ENCODE measurements at regions of chr17 and their contacts with region 1.

Region 1: GRCh38 chr17:48074315-48075081 is 26.3 kb downstream of the NFE2L1 start:
- DNase-seq: no peak
- H3K4me3 ChIP-seq: no peak overlapping the region
- H3K27ac ChIP-seq: no peak overlapping the region
- H3K27me3 ChIP-seq: no peaks in the 10 kb centered on the region
- CTCF ChIP-seq: peak; percentile 85

Region 2: DNA sequence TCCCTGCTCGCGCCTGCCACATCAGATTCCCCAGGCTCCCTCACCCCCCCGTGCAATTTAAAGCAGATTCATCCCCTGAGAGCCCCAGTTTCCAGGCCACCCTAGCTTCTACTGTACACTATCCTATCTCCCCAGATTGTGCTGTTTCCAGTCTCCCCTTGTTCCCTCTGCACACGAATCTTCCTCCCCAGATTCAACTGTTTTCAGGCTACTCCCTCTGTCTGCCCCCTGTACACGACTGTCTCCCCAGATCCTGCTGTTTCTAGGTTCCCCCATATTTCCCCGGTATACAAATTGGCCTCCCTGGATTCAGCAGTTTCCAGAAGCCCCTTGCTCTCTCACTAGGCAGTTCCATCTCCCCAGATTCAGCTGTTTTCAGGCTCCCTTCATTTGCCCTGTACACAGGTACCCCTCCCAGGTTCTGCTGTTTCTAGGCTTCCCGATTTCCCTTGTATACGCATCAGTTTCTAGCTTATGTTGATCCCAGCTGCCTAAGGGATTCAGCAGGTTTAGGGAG is 59.8 kb before region 1 on chr17:
- CTCF ChIA-PET with region 1: no interaction called
- POLR2A ChIA-PET with region 1: no interaction called
- DNase-seq: no peak
- H3K4me3 ChIP-seq: no peak overlapping the region
- H3K27ac ChIP-seq: no peak overlapping the region
- H3K27me3 ChIP-seq: peaks cover 12% of the 10 kb centered on the region
- CTCF ChIP-seq: no peak

Region 3: GRCh38 chr17:48037036-48037837 is 37.3 kb before region 1 on chr17 and contains the start of gene COPZ2:
- CTCF ChIA-PET with region 1: interaction called, 16 read pairs
- POLR2A ChIA-PET with region 1: no interaction called
- DNase-seq: no peak
- H3K4me3 ChIP-seq: peak within 1 kb of the TSS; percentile 70
- H3K27ac ChIP-seq: peak within 1 kb of the TSS; percentile 57
- H3K27me3 ChIP-seq: no peaks in the 10 kb centered on the region
- CTCF ChIP-seq: peak; percentile 57
- polyA plus RNA-seq, gene COPZ2: 107 and 122 TPM in 2 replicates

Region 4: DNA sequence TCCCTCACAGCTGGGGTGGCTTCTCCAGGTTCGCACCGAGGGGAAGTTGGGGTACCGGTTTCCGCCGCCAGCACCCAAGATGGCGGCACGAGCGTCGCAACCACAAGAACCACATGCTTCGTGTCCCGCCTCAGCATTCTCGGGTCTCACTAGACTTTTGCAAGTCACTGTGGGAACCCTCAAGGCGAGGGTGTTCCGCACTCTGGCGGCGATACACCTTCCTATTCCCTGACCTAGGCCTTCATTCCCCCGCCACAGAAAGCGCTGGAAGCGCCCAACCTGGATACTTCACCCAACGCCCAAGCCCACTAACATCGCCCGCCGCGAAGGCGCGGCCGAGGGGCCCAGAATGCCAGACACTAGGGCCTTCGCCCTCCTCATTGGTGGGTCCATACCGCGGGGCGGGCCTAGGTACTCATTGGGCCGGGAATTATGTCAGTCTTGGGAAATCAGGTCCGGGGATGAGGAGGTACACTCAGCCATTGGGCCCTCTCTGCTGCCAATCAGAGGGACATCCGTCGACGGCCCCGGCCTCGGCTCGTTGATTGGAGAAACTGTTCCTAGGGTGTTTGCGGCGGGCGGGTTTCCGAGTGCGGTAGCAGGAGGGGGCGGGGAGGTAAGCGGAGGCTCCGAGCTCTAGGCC is 26.6 kb before region 1 on chr17 and contains the start of gene NFE2L1:
- CTCF ChIA-PET with region 1: interaction called, 9 read pairs
- POLR2A ChIA-PET with region 1: interaction called, 16 read pairs
- DNase-seq: peak; percentile 99
- H3K4me3 ChIP-seq: peak within 1 kb of the TSS; percentile 94
- H3K27ac ChIP-seq: peak within 1 kb of the TSS; percentile 98
- H3K27me3 ChIP-seq: no peaks in the 10 kb centered on the region
- CTCF ChIP-seq: no peak
- polyA plus RNA-seq, gene NFE2L1: 237 and 251 TPM in 2 replicates

Region 5: DNA sequence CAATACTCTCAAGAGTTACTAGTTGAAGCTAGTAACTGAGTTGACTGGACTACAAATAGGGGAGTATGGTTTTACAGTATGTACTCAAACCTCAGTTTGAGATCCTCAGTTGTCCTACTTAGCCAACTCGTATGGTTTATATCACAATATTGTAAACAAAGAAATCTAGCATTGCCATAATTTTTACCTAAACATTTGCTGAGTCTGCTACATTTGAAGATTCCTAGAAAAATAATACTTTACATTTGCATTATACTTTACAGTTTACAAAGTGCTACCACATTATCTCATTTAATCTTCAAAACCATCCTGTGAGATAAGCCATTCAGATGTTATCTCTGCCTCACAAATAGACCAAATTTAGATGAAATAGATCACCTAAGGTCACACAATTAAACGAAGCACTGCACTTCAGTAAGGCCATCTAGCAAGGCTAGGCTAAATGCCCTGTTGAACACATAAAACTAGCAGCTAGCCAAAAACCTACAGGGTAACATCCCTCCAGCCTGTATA is 10.5 kb after region 1 on chr17:
- CTCF ChIA-PET with region 1: interaction called, 24 read pairs
- POLR2A ChIA-PET with region 1: no interaction called
- DNase-seq: no peak
- H3K4me3 ChIP-seq: no peak overlapping the region
- H3K27ac ChIP-seq: no peak overlapping the region
- H3K27me3 ChIP-seq: no peaks in the 10 kb centered on the region
- CTCF ChIP-seq: no peak

Region 6: DNA sequence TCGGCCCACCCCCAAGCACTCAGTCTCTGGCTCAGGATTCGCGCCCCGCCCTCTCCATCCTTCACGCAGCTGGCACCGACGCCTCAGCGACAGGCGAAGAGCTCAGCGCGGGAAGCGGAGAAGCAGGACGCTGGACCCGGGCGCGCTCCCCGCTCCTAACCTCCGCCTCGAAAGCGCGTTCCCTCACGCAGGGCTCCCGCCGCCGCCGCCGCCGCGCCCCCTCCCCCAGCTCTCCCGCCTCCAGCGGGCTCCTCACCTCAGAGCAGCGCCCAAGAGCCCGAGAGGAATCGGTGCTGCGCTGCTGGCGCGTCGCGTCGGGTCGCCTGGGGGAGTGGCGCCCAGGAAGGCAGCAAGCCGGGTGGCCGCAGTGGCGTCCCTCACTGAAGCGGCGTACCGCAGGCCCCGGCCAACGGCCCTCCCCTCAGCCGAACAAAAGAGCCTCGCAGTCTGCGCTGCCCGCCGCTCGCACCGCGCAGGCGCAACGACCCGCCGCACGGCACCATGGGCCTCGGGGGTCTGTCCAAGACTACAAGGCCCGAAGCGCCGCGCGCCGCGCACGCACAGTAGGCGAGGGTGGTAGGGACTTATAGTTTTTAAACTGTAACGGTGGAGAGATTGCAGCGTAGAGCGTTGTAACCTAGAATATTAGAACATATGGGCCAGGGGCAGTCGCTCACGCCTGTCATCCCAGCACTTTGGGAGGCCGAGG is 26.7 kb after region 1 on chr17 and contains the start of gene CBX1:
- CTCF ChIA-PET with region 1: interaction called, 15 read pairs
- POLR2A ChIA-PET with region 1: no interaction called
- DNase-seq: peak; percentile 84
- H3K4me3 ChIP-seq: peak within 1 kb of the TSS; percentile 95
- H3K27ac ChIP-seq: peak within 1 kb of the TSS; percentile 86
- H3K27me3 ChIP-seq: no peaks in the 10 kb centered on the region
- CTCF ChIP-seq: no peak
- polyA plus RNA-seq, gene CBX1: 57.2 and 68.2 TPM in 2 replicates